HCT116 (cell line): ENCODE measurements at regions of chr9 and their contacts with region 1.

Region 1: DNA sequence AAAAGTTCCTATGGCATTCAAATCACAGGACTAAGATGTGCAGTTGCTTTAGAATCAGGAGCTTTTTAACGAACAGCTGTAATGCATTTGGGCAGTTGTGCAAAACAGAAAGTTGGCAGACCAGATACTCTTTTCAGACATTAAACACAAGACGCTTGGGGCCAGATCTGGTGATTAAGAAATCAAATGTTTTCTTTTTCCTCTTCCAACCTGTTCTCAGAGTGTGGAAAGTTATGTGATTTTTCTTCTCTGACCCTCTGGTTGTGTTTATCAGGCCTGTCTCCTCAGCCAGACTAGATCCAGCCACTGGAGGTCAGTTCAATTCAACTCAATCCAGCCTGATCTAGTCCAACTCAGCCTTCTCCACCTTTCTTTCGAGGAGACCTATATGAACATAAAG is 298.5 kb upstream of the PCSK5 start:
- DNase-seq: no peak
- ATAC-seq: no peak
- H3K4me3 ChIP-seq: no peak overlapping the region
- H3K27ac ChIP-seq: no peak overlapping the region
- H3K4me1 ChIP-seq: no peaks in the 10 kb centered on the region
- H3K27me3 ChIP-seq: 0 out of 2 replicates have a peak, but pooled peaks cover 8% of the 10 kb centered on the region
- CTCF ChIP-seq: no peak
- POLR2A ChIP-seq: no peak
- RAD21 ChIP-seq: no peak

Region 2: GRCh38 chr9:75844321-75844720 is 252.3 kb after region 1 on chr9:
- CTCF ChIA-PET with region 1: no interaction called
- POLR2A ChIA-PET with region 1: no interaction called
- RAD21 ChIA-PET with region 1: no interaction called
- intact Hi-C with region 1: loop called (anchors 10 kb)
- DNase-seq: no peak
- ATAC-seq: no peak
- H3K4me3 ChIP-seq: no peak overlapping the region
- H3K27ac ChIP-seq: no peak overlapping the region
- H3K4me1 ChIP-seq: no peaks in the 10 kb centered on the region
- H3K27me3 ChIP-seq: peaks cover 6% of the 10 kb centered on the region; the same call in 1 of the 2 replicates
- CTCF ChIP-seq: no peak
- POLR2A ChIP-seq: no peak
- RAD21 ChIP-seq: no peak

Region 3: GRCh38 chr9:76297721-76298239 is 705.8 kb after region 1 on chr9:
- CTCF ChIA-PET with region 1: no interaction called
- POLR2A ChIA-PET with region 1: no interaction called
- RAD21 ChIA-PET with region 1: no interaction called
- intact Hi-C with region 1: loop called (anchors 10 kb)
- DNase-seq: no peak
- ATAC-seq: no peak
- H3K4me3 ChIP-seq: no peak overlapping the region
- H3K27ac ChIP-seq: no peak overlapping the region
- H3K4me1 ChIP-seq: no peaks in the 10 kb centered on the region
- H3K27me3 ChIP-seq: 0 out of 2 replicates have a peak, but pooled peaks cover 3% of the 10 kb centered on the region
- CTCF ChIP-seq: no peak
- POLR2A ChIP-seq: no peak
- RAD21 ChIP-seq: no peak